ENCODE measurements at regions of chr4 and their contacts with region 1.

Region 1: GRCh38 chr4:67558493-67558892 is at the start of gene STAP1:
- DNase-seq: no peak
- ATAC-seq: no peak
- H3K4me3 ChIP-seq: no peak within 1 kb of the TSS
- H3K27ac ChIP-seq: no peak within 1 kb of the TSS
- H3K4me1 ChIP-seq: no peaks in the 10 kb centered on the region
- H3K27me3 ChIP-seq: no peaks in the 10 kb centered on the region
- CTCF ChIP-seq: no peak
- POLR2A ChIP-seq: no peak
- total RNA-seq, gene STAP1: not detected

Region 2: DNA sequence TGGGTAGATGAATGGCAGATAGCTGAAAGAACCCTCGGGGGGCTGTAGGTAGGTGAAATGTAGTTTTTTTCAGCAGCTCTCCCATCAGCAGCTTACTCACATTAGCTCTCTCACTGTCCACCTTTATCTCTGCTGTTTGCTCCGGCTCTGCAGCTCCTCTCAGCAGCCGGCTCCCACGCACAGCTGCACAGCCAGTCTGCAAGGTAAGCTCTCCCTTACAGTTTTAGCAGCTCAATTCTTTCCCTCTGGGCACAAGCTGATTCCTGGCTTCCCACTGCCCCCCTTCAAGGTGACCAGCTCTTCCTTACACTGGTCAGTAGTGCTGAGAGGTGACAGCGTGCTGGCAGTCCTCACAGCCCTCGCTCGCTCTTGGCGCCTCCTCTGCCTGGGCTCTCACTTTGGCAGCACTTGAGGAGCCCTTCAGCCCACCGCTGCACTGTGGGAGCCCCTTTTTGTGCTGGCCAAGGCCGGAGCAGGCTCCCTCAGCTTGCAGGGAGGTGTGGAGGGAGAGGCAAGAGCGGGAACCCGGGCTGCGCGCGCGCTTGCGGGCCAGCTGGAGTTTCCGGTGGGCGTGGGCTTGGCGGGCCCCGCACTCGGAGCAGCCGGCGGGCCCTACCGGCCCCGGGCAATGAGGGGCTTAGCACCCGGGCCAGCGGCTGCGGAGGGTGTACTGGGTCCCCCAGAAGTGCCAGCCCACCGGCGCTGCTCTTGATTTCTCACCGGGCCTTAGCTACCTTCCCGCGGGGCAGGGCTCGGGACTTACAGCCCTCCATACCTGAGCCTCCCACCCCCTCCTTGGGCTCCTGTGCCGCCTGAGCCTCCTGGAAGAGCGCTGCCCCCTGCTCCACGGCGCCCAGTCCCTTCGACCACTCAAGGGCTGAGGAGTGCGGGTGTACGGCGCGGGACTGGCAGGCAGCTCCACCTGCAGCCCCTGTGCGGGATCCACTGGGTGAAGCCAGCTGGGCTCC is 406.8 kb before region 1 on chr4:
- intact Hi-C with region 1: no loop called
- DNase-seq: no peak
- ATAC-seq: peak; percentile 12
- H3K4me3 ChIP-seq: no peak overlapping the region
- H3K27ac ChIP-seq: no peak overlapping the region
- H3K4me1 ChIP-seq: no peaks in the 10 kb centered on the region
- H3K27me3 ChIP-seq: no peaks in the 10 kb centered on the region
- CTCF ChIP-seq: no peak
- POLR2A ChIP-seq: no peak

Region 3: GRCh38 chr4:67615119-67615518 is 56.6 kb after region 1 on chr4:
- intact Hi-C with region 1: loop called (anchors 10 kb)
- DNase-seq: no peak
- ATAC-seq: no peak
- H3K4me3 ChIP-seq: no peak overlapping the region
- H3K27ac ChIP-seq: no peak overlapping the region
- H3K4me1 ChIP-seq: no peaks in the 10 kb centered on the region
- H3K27me3 ChIP-seq: no peaks in the 10 kb centered on the region
- CTCF ChIP-seq: no peak
- POLR2A ChIP-seq: no peak

Region 4: GRCh38 chr4:67736262-67736661 is 177.8 kb after region 1 on chr4:
- intact Hi-C with region 1: no loop called
- DNase-seq: no peak
- ATAC-seq: no peak
- H3K4me3 ChIP-seq: no peak overlapping the region
- H3K27ac ChIP-seq: no peak overlapping the region
- H3K4me1 ChIP-seq: no peaks in the 10 kb centered on the region
- H3K27me3 ChIP-seq: no peaks in the 10 kb centered on the region
- CTCF ChIP-seq: no peak
- POLR2A ChIP-seq: no peak